ENCODE measurements at regions of chr6 and their contacts with region 1.

Region 1: DNA sequence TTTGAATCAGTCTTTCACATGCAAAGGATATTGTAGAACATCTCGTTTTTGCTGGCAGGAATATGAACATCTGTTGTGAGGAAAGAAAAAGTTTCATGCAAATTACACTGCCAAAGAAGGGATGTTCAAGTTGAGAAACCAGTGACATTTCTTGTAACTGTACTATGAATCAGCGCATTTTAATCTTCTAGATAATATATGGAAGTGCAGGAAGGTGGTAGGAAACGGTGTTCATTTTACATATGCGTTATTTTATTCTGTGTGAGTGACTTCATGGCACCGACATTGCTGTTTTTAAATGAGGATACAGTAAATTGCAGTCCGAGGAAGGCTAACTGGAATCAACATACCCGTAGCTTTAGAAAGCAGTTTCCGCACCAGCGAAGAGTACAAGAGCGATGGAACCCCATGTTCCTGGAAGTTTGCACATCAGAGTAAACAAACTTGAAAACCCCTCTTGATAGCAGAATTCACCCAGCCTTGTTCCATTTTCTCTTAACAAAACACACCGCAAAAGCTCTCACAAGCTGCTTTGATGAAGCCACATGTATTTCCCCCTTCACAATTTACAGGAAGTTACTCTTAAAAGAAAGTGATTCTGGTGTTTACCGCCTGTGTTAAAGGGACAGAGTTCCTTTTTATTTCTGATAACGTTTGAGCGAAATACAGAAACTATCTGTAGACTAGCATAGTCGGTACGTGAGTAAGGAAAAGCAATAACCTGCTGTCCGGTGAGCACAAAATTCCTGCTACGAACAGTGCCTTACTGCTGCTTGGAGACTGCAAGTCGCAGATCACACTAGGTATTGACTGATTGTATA is 11.5 kb downstream of the PRDM1 start:
- DNase-seq: no peak
- ATAC-seq: peak; percentile 54

Region 2: DNA sequence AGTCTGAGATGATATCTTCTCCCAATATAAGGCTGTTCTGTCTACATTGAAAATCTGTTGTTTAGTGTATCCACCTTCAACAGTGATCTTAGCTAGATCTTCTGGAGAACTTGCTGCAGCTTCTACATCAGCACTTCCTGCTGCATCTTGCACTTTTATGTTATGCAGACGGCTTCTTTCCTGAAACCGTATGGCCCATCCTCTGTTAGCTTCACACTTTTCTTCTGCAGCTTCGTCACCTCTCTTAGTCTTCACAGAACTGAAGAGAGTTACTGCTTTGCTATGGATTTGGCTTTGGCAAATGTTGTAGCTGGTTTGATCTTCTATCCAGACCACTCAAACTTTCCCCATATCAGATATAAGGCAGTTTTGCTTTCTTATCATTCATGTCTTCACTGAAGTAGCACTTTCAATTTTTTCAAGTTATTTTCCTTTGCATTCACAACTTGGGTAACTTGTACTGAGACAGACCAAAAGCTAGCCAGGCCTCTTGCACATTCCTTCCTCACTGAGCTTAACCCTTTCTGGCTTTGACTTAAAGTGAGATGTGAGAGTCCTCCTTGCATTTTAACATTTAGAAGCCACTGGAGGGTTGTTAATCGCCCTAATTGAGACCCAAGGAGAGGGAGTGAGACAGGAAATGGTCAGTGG is 804.8 kb before region 1 on chr6:
- intact Hi-C with region 1: no loop called
- DNase-seq: no peak
- ATAC-seq: no peak

Region 3: DNA sequence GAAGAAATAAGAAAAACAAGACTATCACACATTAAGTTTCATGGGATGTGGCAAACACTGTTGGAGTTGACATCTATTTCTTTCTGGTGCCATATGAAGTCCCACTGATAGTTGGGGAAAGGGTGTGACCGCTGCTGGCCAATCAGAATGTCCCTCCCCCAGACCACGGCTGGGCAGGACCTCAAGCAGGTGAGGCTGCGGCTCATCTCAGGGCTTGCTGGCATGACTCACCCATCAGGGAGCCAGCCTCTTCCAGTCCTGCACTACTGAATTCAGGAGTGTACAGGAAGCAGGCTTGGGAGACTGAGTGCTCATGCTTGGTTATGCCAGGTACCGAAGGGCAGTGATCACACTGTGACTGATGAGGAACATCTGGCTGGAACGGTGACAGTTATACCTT is 713.6 kb before region 1 on chr6:
- intact Hi-C with region 1: no loop called
- DNase-seq: no peak
- ATAC-seq: no peak

Region 4: GRCh38 chr6:105898286-105898685 is 199.3 kb before region 1 on chr6:
- intact Hi-C with region 1: no loop called
- DNase-seq: no peak
- ATAC-seq: no peak

Region 5: DNA sequence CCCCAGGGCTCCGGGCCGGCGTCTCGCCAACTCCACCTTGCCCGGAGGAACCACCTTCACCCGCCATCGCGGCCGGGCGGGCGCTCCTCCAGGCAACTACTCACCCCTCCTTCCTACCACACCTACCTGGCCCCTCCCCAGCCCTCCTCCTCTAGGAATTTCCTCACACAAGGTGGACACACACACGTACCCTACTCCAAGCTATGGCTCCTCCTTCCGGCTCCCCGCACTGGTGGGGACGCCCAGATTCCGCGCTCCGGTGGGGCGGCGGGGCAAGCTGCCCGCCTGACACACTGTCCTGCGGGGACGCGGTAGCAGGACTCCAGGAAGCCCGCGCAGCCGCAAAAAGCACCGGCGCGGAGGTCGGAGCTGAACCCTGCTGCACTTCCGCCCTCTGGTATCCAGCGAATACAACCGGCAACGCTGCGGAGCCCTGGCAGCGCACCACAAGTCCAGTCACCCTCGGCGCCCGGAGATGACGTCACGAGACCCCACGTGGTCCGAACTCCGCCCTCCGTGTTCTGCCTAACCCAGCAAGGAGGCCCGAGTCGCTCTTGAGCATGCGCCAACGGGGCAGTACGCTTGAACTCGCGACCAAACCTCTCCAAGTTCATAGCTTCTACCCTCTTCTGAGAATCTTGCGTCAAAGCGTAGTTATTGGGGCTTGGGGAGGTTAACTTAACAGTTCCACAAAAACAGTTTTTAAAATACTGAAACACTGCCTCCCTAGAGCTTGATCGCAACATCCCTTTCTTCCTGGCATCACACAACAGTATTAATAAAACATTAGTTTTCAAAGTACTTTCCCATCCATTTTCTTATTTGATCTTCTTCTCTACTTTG is 227.9 kb after region 1 on chr6 and contains the start of gene ATG5:
- intact Hi-C with region 1: loop called (anchors 10 kb)
- DNase-seq: peak; percentile 100
- ATAC-seq: peak; percentile 99
- total RNA-seq, gene ATG5: 19.2 TPM

Measured in Right ventricle myocardium inferior (tissue), 1 donor.